ENCODE measurements at regions of chr10 and their contacts with region 1.

Region 1: DNA sequence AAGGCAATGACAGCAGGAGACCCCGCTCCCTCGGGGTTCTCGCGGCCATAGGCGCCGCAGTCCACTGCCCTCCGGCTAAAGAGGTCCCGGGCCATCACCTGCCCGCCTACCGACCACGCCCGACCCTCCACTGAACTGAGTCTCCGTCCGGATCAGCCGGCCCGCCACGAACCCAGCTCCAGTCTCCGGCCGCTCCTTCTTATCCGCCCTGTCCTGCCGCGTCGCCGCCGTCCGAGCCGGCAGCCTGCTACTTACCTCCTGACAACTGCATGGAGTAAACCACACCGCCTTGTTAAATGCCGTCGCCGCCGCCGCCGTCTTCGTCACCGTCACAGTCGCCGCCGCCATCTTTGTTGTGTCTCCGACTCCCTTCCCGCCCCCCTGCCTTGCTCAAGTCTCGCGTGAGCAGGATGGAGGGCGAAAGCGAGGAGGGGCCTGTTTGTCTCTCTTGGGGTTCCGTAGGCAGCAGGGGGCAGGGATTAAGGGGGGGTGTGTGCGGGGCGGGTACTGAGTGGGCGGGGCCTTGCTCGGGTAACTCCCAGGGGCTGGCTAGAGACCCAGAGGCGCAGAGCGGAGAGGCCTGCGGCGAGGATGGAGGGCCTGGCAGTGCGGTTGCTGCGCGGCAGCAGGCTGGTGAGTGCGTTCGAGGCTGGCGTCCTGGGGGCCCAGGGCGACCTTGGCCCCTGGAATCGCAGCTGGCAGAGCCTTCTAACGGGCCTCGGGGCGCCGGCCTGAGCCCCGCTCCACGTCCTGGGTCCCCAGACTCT is at the starts of genes ACADSB and IKZF5:
- DNase-seq: peak; percentile 94
- H3K4me3 Mint-ChIP-seq: peak within 1 kb of the TSS; percentile 95
- H3K27ac Mint-ChIP-seq: peak within 1 kb of the TSS; percentile 95
- H3K4me1 Mint-ChIP-seq: peaks cover 43% of the 10 kb centered on the region
- H3K27me3 Mint-ChIP-seq: no peaks in the 10 kb centered on the region
- total RNA-seq, gene ACADSB: 25.8 and 26.5 TPM in 2 replicates
- total RNA-seq, gene IKZF5: 17.4 and 21.9 TPM in 2 replicates

Region 2: GRCh38 chr10:121927841-121928527 is 1080.6 kb before region 1 on chr10 and contains the start of gene ATE1:
- intact Hi-C with region 1: loop called (anchors 1 kb)
- DNase-seq: peak; percentile 82
- H3K4me3 Mint-ChIP-seq: peak within 1 kb of the TSS; percentile 91
- H3K27ac Mint-ChIP-seq: peak within 1 kb of the TSS; percentile 96
- H3K4me1 Mint-ChIP-seq: peaks cover 19% of the 10 kb centered on the region
- H3K27me3 Mint-ChIP-seq: no peaks in the 10 kb centered on the region
- total RNA-seq, gene ATE1: 37.5 and 40.2 TPM in 2 replicates

Region 3: DNA sequence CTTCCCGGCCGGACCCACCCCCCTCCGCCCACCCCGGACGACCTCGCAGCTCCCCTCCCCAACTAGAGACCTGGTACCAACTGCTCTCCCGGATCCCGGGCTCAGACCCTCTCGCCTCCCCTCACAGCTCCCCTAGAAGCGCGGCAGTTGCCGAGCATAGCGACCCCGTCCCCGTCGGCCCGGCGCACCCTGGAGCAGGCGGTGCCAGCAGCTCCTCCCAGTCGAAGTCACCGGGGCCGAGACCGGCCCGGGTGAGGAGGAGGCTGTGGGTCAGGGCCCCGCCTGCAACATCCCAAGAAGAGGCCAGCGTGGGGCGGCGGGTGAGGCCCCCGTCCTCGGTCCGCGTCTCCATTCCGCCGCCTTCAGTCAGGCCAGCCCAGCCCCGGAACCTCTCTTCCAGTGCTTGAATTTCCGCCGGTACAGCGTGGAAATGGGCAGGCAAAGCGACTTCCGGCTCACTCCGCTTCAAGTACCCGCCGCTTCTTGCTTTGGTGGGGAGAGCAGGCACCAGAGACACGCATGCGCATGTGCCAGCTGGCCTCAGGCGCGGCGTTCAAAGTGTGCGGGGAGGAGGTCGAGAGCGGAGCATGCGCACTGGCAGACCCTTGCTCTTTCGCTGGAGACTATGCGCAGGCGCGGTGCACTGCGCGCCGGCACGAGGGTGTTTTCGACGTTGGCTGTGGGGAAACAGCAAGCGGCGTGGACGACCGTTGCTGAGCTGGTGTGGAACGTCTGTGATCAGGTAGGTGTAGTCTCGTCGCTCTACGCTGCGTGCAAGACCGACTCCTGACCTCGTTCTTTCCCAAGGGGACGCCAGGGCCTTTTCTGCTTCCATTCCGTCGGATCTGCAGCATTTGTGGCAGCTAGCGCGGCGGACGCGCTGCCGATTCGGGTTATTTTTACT is 54.5 kb before region 1 on chr10 and contains the start of gene C10orf88:
- intact Hi-C with region 1: loop called (anchors 1 kb)
- DNase-seq: peak; percentile 97
- H3K4me3 Mint-ChIP-seq: peak within 1 kb of the TSS; percentile 87
- H3K27ac Mint-ChIP-seq: peak within 1 kb of the TSS; percentile 88
- H3K4me1 Mint-ChIP-seq: peaks cover 47% of the 10 kb centered on the region
- H3K27me3 Mint-ChIP-seq: peaks cover 15% of the 10 kb centered on the region
- total RNA-seq, gene C10orf88: 11.8 and 14.1 TPM in 2 replicates

Region 4: GRCh38 chr10:124418726-124419501 is 1410.3 kb after region 1 on chr10 and contains the start of gene OAT:
- intact Hi-C with region 1: loop called (anchors 2 kb)
- DNase-seq: peak; percentile 95
- H3K4me3 Mint-ChIP-seq: peak within 1 kb of the TSS; percentile 81
- H3K27ac Mint-ChIP-seq: peak within 1 kb of the TSS; percentile 29
- H3K4me1 Mint-ChIP-seq: peaks cover 12% of the 10 kb centered on the region
- H3K27me3 Mint-ChIP-seq: peaks cover 22% of the 10 kb centered on the region
- total RNA-seq, gene OAT: 35.6 and 37.9 TPM in 2 replicates

Region 5: GRCh38 chr10:124802313-124802675 is 1793.7 kb after region 1 on chr10:
- intact Hi-C with region 1: loop called (anchors 5 kb)
- DNase-seq: no peak
- H3K4me3 Mint-ChIP-seq: peak overlapping the region; percentile 95
- H3K27ac Mint-ChIP-seq: peak overlapping the region; percentile 89
- H3K4me1 Mint-ChIP-seq: peaks cover 19% of the 10 kb centered on the region
- H3K27me3 Mint-ChIP-seq: peaks cover 6% of the 10 kb centered on the region

Measured in activated T-helper 1 cell treated with anti-CD3 and anti-CD28 coated beads, Interleukin-12 subunit alpha, Interleukin-12 subunit beta, Interleukin-2, Interleukin-4 antibody, amounts not matched to agents 30 ng/mL and 10 ng/mL and 1 ng/mL, durations not matched to agents 14 hours and 24 hours and 36 hours (primary cell).